ENCODE measurements at regions of chr11 and their contacts with region 1.

Region 1: GRCh38 chr11:122781378-122782195 is 56.7 kb upstream of the CRTAM start:
- DNase-seq: peak; percentile 86 to 92
- ATAC-seq: peak; percentile 89 to 91 (median 90)
- H3K4me3 ChIP-seq: no peak overlapping the region
- H3K27ac ChIP-seq: no peak overlapping the region
- H3K4me1 ChIP-seq: peaks cover 15% of the 10 kb centered on the region
- H3K27me3 ChIP-seq: no peaks in the 10 kb centered on the region
- CTCF ChIP-seq: peak; percentile 91

Region 2: DNA sequence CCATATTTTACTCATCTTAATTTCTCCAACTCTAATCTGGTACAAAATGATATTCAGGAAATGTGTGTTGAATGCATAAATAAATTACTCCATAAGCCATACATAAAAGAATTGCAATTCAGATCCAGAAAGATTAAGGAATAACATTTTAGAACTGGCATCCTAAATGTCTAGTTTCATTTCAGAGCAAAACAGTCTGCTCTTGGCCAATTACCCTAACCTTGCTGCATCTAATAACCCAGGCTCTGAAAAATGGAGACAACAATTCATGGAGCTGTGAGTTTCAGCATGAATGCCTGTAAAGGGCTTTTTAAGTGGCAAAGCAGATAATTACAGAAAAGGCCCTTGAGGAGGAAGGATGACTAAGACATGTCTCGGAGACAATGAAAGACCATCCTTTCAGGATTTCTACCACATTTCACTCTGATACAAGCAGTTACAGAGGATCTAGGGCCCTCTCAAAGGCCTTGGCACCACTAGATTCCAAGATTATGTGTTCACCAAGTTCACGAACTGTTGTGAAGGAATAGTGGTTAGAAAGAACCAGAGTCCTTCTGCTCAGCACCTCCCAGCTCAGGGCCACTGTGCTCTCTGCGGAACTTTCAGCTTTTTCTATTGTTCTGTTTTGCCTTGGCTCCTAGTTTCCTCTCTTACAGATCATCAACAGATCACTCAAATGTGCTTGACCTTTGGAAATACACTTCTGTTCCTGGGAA is 508.0 kb before region 1 on chr11:
- intact Hi-C with region 1: loop called in 1 of 2 experiments (anchors 5 kb)
- DNase-seq: no peak
- ATAC-seq: no peak
- H3K4me3 ChIP-seq: no peak overlapping the region
- H3K27ac ChIP-seq: no peak overlapping the region
- H3K4me1 ChIP-seq: no peaks in the 10 kb centered on the region
- H3K27me3 ChIP-seq: no peaks in the 10 kb centered on the region
- CTCF ChIP-seq: no peak

Region 3: GRCh38 chr11:122578168-122578825 is 203.3 kb before region 1 on chr11:
- intact Hi-C with region 1: loop called (anchors 2 to 10 kb)
- DNase-seq: no peak
- ATAC-seq: no peak
- H3K4me3 ChIP-seq: no peak overlapping the region
- H3K27ac ChIP-seq: no peak overlapping the region
- H3K4me1 ChIP-seq: no peaks in the 10 kb centered on the region
- H3K27me3 ChIP-seq: no peaks in the 10 kb centered on the region
- CTCF ChIP-seq: no peak

Region 4: GRCh38 chr11:122584670-122585069 is 196.9 kb before region 1 on chr11:
- intact Hi-C with region 1: loop called (anchors 2 to 10 kb)
- DNase-seq: no peak
- ATAC-seq: no peak
- H3K4me3 ChIP-seq: no peak overlapping the region
- H3K27ac ChIP-seq: no peak overlapping the region
- H3K4me1 ChIP-seq: no peaks in the 10 kb centered on the region
- H3K27me3 ChIP-seq: no peaks in the 10 kb centered on the region
- CTCF ChIP-seq: no peak

Region 5: DNA sequence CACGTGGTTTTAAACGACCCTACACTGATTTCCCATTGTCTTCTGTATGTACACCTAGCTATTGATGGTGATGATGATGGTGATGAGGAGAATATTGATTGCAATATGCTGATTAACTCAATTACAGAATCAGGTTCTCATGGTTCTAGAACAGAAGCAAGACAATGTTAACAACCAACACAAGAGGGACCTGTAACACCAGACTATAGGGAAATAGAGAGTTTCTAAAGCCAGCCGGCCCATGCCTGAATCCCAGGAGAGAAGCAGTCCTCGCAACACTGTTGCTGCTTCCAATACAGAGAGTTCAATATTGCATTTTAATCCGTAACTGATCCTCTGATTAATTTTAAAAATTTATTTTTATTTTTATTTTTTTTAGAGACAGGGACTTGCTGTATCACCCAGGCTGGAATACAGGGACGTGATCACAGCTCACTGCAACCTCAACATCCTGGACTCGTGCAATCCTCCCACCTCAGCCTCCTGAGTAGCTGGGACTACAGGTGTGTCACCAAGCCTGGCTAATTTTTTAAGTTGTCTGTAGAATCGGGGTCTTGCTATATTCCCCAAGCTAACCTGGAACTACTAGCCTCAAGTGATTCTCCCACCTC is 148.3 kb before region 1 on chr11:
- intact Hi-C with region 1: loop called (anchors 2 to 5 kb)
- DNase-seq: peak in 1 of 2 donors; percentile 54
- ATAC-seq: peak; percentile 57 to 76 (median 62)
- H3K4me3 ChIP-seq: no peak overlapping the region
- H3K27ac ChIP-seq: no peak overlapping the region
- H3K4me1 ChIP-seq: no peaks in the 10 kb centered on the region
- H3K27me3 ChIP-seq: peaks cover 0 to 6% (median 0%) of the 10 kb centered on the region in 3 donors
- CTCF ChIP-seq: peak; percentile 57

Region 6: GRCh38 chr11:122749005-122749687 is 32.4 kb before region 1 on chr11:
- intact Hi-C with region 1: no loop called
- DNase-seq: no peak
- ATAC-seq: peak; percentile 57 to 80 (median 71)
- H3K4me3 ChIP-seq: no peak overlapping the region
- H3K27ac ChIP-seq: no peak overlapping the region
- H3K4me1 ChIP-seq: no peaks in the 10 kb centered on the region
- H3K27me3 ChIP-seq: no peaks in the 10 kb centered on the region
- CTCF ChIP-seq: no peak